ENCODE measurements at regions of chr6 and their contacts with region 1.

Region 1: GRCh38 chr6:107689951-107690642 is 134.0 kb downstream of the SCML4 start:
- DNase-seq: no peak
- CTCF ChIP-seq: no peak

Region 2: DNA sequence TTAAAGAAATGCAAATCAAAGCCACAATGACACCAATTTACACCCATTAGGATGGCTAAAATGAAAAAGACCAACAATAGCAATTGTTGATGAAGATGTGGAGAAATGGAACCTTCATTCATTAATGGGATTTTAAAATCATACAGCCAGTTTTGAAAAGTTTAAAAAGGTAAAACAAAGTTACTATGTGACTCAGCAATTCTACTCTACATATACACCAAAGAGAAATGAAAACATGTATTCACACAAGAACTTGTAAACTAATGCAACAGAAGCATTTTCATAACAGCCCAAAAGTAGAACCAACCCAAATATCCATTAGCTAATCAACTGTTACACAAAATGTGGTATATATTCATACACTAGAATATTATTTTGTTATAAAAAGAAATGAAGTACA is 306.4 kb before region 1 on chr6:
- in situ Hi-C with region 1: no loop called
- DNase-seq: no peak
- CTCF ChIP-seq: no peak

Region 3: DNA sequence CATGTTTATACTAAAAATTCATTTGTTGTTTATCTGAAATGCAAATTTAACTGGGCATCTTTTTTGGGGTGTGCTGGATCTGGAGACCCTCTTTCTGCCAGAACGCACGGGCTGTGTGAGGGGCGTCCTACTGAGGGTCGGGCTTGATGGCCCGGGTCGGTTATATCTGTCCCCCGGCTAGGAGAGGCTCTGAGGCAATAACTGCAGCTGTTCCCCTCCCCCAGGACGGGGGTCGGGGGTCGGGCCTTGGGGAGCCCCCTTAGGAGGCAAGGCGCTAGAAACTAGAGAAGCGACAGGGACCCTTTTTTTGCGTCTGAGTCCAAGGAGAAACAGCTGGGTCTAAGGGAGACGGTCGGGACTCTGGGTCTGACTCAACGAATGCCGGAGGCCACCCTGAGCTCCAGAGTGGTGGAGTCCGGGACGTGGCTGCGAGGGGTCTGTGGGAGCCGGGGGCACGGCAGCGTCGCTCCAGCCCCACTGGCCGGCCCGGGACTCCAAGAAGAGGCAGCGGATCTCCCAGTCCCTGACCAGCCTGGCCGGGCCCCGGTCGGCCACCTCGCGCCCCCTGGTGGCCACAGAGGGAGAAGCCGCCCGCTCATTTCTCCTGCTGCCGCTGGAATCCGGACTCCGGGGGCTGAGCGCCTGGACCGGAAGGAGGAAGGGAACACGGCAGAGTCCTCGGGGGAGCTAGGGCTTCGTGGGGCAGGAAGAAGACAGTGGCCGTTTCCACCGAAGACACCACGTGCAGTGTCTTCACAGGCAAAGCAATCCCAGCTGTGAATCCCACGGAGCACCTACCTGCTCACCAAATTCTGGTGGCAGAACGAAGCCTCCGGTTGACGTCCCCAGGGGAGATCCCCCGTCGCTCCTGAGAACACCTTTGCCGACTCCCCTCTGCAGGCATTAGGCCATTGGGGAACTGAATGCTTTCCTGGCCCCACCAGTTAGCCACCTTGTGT is 158.0 kb after region 1 on chr6:
- in situ Hi-C with region 1: loop called (anchors 10 kb)
- DNase-seq: peak; percentile 85
- CTCF ChIP-seq: peak; percentile 92

Region 4: GRCh38 chr6:107982486-107982885 is 292.4 kb after region 1 on chr6:
- in situ Hi-C with region 1: no loop called
- DNase-seq: no peak
- CTCF ChIP-seq: no peak

Region 5: DNA sequence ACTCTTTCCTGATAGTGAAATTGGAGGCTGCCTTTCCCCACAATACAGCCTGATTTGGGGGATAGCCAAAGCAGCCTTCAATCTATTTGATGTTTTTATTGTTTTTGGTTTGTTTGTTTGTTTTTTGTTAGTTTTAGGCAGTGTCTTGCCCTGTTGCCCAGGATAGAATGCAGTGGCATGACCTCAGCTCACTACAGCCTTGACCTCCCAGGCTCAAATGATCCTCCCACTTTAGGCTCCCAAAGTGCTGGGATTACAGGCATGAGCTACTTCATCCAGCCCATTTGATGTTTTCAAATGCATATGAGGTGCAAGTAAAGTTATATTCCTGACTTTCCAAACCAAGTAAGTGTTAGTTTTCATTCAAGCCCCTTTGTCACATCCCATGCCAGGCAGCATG is 309.2 kb after region 1 on chr6:
- in situ Hi-C with region 1: no loop called
- DNase-seq: no peak
- CTCF ChIP-seq: no peak

Measured in GM13977 (cell line).